Esophagus muscularis mucosa (tissue), 4 donors: ENCODE measurements at regions of chr10 and their contacts with region 1.

Region 1: GRCh38 chr10:107418407-107418806 is 253.9 kb upstream of the SORCS1 start:
- DNase-seq: no peak
- H3K4me3 ChIP-seq: no peak overlapping the region
- H3K27ac ChIP-seq: no peak overlapping the region
- H3K4me1 ChIP-seq: no peaks in the 10 kb centered on the region
- H3K27me3 ChIP-seq: no peaks in the 10 kb centered on the region
- CTCF ChIP-seq: no peak
- EP300 ChIP-seq: no peak
- POLR2A ChIP-seq: no peak

Region 2: DNA sequence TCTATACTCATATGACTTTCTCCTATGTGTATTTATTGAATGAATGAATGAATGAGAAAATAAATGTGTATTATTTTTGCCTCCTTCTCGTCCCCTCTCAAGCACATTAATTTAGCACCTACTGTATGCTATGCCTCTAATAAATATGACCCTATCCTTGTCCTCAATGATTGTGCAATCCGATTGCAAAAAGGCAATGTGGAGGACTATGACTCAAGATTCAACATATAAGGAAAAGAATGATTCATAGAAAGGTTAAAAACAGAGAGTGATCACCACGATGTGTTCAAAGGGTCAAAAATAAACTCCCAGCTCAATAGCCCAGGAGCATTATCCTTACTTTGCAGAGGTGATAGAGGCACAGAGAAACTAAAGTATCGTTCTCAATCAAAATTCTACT is 68.9 kb after region 1 on chr10:
- intact Hi-C with region 1: no loop called
- DNase-seq: no peak
- H3K4me3 ChIP-seq: no peak overlapping the region
- H3K27ac ChIP-seq: no peak overlapping the region
- H3K4me1 ChIP-seq: no peaks in the 10 kb centered on the region
- H3K27me3 ChIP-seq: no peaks in the 10 kb centered on the region
- CTCF ChIP-seq: no peak
- EP300 ChIP-seq: no peak
- POLR2A ChIP-seq: no peak

Region 3: GRCh38 chr10:107718864-107719263 is 300.5 kb after region 1 on chr10:
- intact Hi-C with region 1: no loop called
- DNase-seq: no peak
- H3K4me3 ChIP-seq: no peak overlapping the region
- H3K27ac ChIP-seq: no peak overlapping the region
- H3K4me1 ChIP-seq: no peaks in the 10 kb centered on the region
- H3K27me3 ChIP-seq: no peaks in the 10 kb centered on the region
- CTCF ChIP-seq: no peak
- EP300 ChIP-seq: no peak
- POLR2A ChIP-seq: no peak

Region 4: GRCh38 chr10:107814865-107815487 is 396.6 kb after region 1 on chr10:
- intact Hi-C with region 1: loop called (anchors 10 kb)
- DNase-seq: no peak
- H3K4me3 ChIP-seq: no peak overlapping the region
- H3K27ac ChIP-seq: no peak overlapping the region
- H3K4me1 ChIP-seq: no peaks in the 10 kb centered on the region
- H3K27me3 ChIP-seq: no peaks in the 10 kb centered on the region
- CTCF ChIP-seq: peak in 2 of 3 experiments; percentile 31 to 47
- EP300 ChIP-seq: no peak
- POLR2A ChIP-seq: no peak